ENCODE measurements at regions of chr7 and their contacts with region 1.

Region 1: DNA sequence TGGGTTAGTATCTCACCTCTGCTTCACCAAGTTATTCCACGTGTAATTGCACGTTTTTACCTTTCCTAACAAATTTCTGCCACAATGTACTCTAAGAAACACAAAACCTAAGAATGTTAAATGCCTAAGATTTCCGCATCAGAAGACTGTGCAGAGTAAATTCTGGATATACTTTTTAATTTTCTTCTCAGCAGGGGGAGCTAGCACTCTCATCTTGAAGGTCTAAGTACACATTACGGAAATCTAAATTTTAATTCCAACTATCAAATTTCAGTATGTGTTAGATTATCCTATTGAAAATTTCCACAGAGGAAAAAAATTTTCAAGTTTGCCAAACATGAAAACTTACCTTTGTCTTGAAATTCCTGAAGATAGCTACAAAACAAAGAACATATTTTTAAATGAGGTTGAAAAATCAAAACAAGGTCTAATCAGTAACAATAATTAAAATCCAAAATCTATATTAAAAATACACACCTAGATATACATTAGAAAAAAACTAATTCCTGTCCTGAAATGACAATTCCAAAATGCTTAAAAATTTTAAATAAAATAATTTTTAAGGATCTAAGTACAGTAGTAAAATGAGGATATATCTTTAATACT is 10.5 kb downstream of the SKAP2 start:
- DNase-seq: no peak
- H3K4me3 ChIP-seq: no peak overlapping the region
- H3K27ac ChIP-seq: no peak overlapping the region
- H3K4me1 ChIP-seq: peaks cover 0 to 41% (median 16%) of the 10 kb centered on the region in 4 donors
- H3K27me3 ChIP-seq: no peaks in the 10 kb centered on the region
- CTCF ChIP-seq: peak; percentile 52 to 69 (median 57)
- EP300 ChIP-seq: no peak
- POLR2A ChIP-seq: no peak

Region 2: DNA sequence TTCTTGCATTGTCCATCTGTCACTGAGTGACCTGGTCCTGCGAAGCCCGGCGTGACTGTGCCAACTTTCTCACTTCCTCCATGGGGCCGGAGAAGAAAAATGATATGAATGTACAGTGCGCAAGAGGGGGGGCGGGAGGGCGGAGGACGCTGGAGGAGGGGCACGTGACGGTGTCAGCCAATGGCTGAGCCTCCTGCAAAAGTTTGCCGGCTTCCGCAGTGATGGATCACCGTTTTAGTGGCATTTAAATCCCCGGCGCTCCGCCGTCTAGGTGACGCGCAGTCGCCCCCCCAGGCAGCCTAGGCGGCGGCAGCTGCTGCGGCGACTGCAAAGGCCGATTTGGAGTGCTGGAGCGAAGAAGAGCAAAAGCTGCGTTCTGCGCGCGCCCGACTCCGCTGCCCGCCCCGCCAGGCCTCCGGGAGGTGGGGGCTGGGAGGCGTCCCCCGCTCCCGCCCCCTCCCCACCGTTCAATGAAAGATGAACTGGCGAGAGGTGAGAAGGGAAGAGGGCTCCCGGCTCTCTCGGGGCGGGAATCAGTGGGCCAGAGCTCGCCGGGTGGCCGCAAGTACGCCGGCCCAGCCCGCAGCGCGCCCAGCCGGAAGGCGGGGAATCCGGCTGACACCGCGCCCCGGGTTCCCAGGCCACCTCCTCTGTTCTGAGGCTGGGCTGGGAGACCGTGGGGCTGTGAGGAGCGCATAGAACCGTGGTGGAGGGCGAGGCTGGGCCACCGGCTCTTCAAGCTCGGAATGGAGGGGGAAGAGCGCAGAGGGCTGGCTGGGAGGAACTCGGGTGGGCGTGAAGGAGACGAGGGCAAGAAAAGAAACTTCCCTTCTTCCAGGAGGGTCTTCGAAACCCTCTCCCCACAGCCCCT is 242.2 kb after region 1 on chr7 and contains the start of gene HOXA1:
- in situ Hi-C with region 1: loop called in 1 of 4 experiments (anchors 10 kb)
- intact Hi-C with region 1: loop called (anchors 10 kb)
- DNase-seq: peak; percentile 90
- H3K4me3 ChIP-seq: peak within 1 kb of the TSS; percentile 57 to 97 (median 64)
- H3K27ac ChIP-seq: peak within 1 kb of the TSS; percentile 90 to 96 (median 92)
- H3K4me1 ChIP-seq: peaks cover 19 to 46% (median 41%) of the 10 kb centered on the region in 4 donors
- H3K27me3 ChIP-seq: no peaks in the 10 kb centered on the region
- CTCF ChIP-seq: no peak
- EP300 ChIP-seq: no peak
- POLR2A ChIP-seq: peak; percentile 92
- total RNA-seq, gene HOXA1: 1.4 to 3.2 (median 1.8) TPM

Region 3: DNA sequence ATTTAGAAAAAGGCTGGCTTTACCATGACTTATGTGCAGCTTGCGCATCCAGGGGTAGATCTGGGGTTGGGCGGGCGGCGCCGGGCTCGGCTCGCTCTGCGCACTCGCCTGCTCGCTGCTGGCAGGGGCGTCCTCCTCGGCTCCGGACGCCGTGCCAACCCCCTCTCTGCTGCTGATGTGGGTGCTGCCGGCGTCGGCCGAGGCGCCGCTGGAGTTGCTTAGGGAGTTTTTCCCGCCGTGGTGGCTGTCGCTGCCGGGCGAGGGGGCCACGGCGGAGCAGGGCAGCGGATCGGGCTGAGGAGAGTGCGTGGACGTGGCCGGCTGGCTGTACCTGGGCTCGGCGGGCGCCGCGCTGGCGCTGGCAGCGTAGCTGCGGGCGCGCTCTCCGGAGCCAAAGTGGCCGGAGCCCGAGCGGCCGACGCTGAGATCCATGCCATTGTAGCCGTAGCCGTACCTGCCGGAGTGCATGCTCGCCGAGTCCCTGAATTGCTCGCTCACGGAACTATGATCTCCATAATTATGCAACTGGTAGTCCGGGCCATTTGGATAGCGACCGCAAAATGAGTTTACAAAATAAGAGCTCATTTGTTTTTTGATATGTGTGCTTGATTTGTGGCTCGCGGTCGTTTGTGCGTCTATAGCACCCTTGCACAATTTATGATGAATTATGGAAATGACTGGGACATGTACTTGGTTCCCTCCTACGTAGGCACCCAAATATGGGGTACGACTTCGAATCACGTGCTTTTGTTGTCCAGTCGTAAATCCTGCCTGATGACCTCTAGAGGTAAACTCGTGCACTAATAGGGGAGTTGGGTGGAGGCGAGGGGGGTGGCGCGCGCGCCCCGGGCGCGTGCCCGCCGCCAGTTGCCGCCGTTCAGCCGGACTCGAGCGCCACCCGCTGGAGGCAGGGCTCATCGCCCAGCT is 289.4 kb after region 1 on chr7 and contains the start of gene HOXA5:
- in situ Hi-C with region 1: loop called (anchors 5 to 10 kb)
- intact Hi-C with region 1: loop called (anchors 5 kb)
- DNase-seq: peak; percentile 84
- H3K4me3 ChIP-seq: peak within 1 kb of the TSS; percentile 33 to 77 (median 46)
- H3K27ac ChIP-seq: peak within 1 kb of the TSS; percentile 95 to 99 (median 98)
- H3K4me1 ChIP-seq: peaks cover 0 to 64% (median 56%) of the 10 kb centered on the region in 4 donors
- H3K27me3 ChIP-seq: peaks cover 12% of the 10 kb centered on the region
- CTCF ChIP-seq: peak; percentile 80 to 93 (median 83)
- EP300 ChIP-seq: peak; percentile 24
- POLR2A ChIP-seq: peak; percentile 59
- total RNA-seq, gene HOXA5: 18.3 to 89.8 (median 31.6) TPM

Region 4: DNA sequence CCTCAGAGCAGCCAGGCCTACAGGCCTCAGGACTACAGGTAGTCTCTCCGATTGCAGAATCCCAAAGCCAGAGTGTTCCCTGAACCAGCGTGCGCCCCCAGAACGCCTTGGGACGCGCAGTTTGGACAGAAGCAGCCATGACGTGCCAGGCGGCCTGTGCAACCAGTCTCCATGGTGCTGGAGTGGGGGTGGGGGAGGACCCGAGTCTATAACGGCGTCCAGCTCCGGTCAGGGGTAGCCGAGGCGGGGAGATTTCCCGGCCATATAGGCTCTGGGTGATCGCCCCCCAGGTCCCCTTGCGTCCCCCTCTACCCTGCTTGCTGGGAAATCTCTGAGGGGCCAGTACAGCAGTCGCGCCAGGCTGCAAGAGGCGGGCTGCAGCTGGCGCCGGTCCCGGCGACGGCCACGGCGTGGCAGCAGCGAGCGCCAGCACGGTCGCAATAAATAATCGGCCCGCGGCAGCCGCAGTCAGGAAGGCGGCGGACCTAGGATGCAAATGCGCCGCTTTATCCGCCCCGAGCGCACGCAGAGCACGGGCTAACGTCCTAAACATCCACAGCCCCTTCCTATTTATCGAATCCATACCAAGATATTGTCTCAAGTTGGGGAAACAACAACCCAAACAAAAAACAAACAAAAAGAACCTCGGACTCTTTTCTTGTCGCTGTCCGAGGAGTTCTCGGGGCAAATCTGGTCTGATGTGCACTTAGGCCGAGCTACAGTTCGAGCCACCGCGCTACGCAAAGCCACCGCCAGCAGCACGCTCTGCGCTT is 296.9 kb after region 1 on chr7:
- in situ Hi-C with region 1: loop called in 3 of 4 experiments (anchors 10 kb)
- intact Hi-C with region 1: loop called (anchors 5 kb)
- DNase-seq: peak; percentile 86
- H3K4me3 ChIP-seq: peak overlapping the region; percentile 71 to 81 (median 76)
- H3K27ac ChIP-seq: peak overlapping the region; percentile 95 to 99 (median 98)
- H3K4me1 ChIP-seq: peaks cover 21 to 85% (median 64%) of the 10 kb centered on the region in 4 donors
- H3K27me3 ChIP-seq: peaks cover 58% of the 10 kb centered on the region
- CTCF ChIP-seq: peak; percentile 86 to 97 (median 93)
- EP300 ChIP-seq: no peak
- POLR2A ChIP-seq: peak; percentile 96